Left ventricle myocardium superior (tissue), 1 donor: ENCODE measurements at regions of chr20 and their contacts with region 1.

Region 1: GRCh38 chr20:41476013-41476752 is 109.6 kb upstream of the EMILIN3 start:
- DNase-seq: no peak
- ATAC-seq: peak; percentile 90

Region 2: DNA sequence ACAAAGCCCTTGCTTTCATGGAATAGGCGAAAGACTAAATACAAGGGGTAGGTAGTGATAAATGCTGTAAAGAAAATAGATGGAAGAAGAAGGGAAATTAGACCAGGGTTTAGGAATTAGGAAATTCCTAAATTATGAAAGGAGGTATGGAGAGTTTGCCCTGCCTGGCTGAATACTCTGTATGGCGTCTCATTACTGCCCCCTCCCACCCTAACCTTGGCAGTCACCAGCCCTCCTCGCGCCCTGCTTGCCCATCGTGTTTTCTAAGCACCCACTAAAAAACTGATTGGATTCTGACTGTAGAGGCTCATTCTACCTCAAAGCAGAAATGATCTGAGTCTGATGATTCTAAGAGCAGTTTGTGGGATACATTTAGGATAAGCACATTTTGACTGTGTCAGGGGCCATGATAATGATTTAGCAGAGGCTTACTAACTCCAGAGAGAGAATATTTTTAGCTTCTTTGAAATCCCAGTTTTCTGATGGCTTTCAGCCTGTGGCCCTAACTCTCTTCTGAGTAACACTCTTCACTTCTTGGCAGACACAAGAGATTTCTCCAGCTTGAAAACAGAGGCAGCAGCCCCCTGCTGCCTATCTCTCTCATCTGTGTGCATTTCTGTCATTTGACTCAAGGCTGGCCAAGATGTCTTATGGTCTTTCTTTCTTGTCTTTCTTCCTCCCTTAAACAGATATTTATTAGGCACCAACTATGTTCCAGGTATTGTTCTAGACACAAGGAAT is 143.3 kb after region 1 on chr20:
- intact Hi-C with region 1: loop called (anchors 10 kb)
- DNase-seq: no peak
- ATAC-seq: no peak

Region 3: DNA sequence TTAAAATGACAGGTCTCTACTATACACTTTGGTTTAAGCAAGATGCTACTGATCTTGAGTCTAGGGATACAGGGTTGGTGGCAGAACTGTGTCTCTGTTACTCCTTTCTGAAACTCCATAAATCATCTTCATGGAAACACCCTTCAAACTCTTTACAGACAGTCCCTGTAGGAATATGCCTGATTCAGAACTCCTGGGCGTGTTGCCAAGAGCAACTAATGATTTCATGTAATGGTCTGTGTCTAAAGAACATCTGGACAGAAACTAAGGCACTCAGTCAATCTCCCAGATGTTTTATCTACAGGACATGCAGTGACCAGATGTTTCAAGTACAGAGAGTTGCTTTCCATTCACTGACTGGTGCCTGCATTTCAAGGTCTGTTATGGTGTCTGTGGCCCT is 606.4 kb after region 1 on chr20:
- intact Hi-C with region 1: no loop called
- DNase-seq: peak; percentile 53
- ATAC-seq: peak; percentile 91